PC-9 (cell line): ENCODE measurements at regions of chr20 and their contacts with region 1.

Region 1: GRCh38 chr20:44187051-44187762 is at the start of gene JPH2:
- DNase-seq: peak; percentile 89 to 94
- H3K4me3 ChIP-seq: peak within 1 kb of the TSS; percentile 97
- H3K27ac ChIP-seq: peak within 1 kb of the TSS; percentile 91
- H3K4me1 ChIP-seq: peaks cover 69% of the 10 kb centered on the region
- H3K27me3 ChIP-seq: no peaks in the 10 kb centered on the region
- CTCF ChIP-seq: no peak
- total RNA-seq, gene JPH2: 41.1 and 58.8 TPM in 2 replicates

Region 2: GRCh38 chr20:43448748-43449535 is 738.3 kb before region 1 on chr20:
- CTCF ChIA-PET with region 1: interaction called, 6 read pairs
- POLR2A ChIA-PET with region 1: no interaction called
- intact Hi-C with region 1: loop called (anchors 5 kb)
- DNase-seq: peak in 1 of 2 experiments; percentile 59
- H3K4me3 ChIP-seq: no peak overlapping the region
- H3K27ac ChIP-seq: no peak overlapping the region
- H3K4me1 ChIP-seq: no peaks in the 10 kb centered on the region
- H3K27me3 ChIP-seq: peaks cover 5% of the 10 kb centered on the region
- CTCF ChIP-seq: peak; percentile 92

Region 3: GRCh38 chr20:43492101-43492500 is 695.1 kb before region 1 on chr20:
- CTCF ChIA-PET with region 1: no interaction called
- POLR2A ChIA-PET with region 1: no interaction called
- intact Hi-C with region 1: no loop called
- DNase-seq: peak in 1 of 2 experiments; percentile 62
- H3K4me3 ChIP-seq: no peak overlapping the region
- H3K27ac ChIP-seq: no peak overlapping the region
- H3K4me1 ChIP-seq: peaks cover 6% of the 10 kb centered on the region; the same call in 1 of the 2 replicates
- H3K27me3 ChIP-seq: no peaks in the 10 kb centered on the region
- CTCF ChIP-seq: no peak

Region 4: DNA sequence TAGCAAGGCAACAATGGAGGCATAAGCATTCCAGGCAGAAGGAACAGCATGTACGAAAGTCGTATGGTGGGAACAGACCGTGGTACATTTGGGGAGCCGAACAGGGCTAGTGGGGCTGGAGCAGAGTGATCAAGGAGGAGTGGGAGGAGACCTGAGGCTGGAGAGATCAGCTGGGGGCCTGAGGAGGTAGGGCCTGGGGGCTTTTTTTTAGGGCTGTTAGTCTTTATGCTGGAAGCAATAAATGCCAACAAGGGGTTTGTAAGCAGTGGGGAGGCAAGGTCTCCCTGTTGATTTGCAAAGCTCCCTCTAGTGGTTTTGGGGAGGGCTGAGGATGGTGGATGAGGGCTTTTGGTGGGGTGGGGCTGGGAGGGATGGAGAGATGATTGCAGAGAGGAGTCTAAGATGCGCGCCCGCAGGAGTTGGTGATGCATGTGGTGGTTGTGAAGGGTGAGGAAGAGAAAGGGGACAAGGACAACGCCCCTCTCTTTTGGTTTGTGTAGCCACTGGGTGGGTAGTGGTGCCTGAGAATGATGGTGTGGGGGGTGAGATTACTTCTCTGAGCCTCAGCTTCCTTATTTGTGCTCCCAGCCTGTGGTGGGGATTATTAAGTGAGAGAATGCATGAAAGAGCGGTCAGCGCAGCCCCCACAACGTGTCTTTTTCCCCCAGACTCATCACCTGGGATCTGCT is 346.7 kb before region 1 on chr20:
- CTCF ChIA-PET with region 1: no interaction called
- POLR2A ChIA-PET with region 1: no interaction called
- intact Hi-C with region 1: loop called (anchors 1 kb)
- DNase-seq: peak in 1 of 2 experiments; percentile 15
- H3K4me3 ChIP-seq: no peak overlapping the region
- H3K27ac ChIP-seq: no peak overlapping the region
- H3K4me1 ChIP-seq: peaks cover 39% of the 10 kb centered on the region
- H3K27me3 ChIP-seq: no peaks in the 10 kb centered on the region
- CTCF ChIP-seq: peak; percentile 66

Region 5: GRCh38 chr20:44080646-44081267 is 106.5 kb before region 1 on chr20:
- CTCF ChIA-PET with region 1: interaction called, 4 read pairs
- POLR2A ChIA-PET with region 1: interaction called, 4 read pairs
- intact Hi-C with region 1: loop called (anchors 1 kb)
- DNase-seq: peak; percentile 58 to 80
- H3K4me3 ChIP-seq: no peak overlapping the region
- H3K27ac ChIP-seq: no peak overlapping the region
- H3K4me1 ChIP-seq: peaks cover 17% of the 10 kb centered on the region
- H3K27me3 ChIP-seq: no peaks in the 10 kb centered on the region
- CTCF ChIP-seq: peak; percentile 100

Region 6: GRCh38 chr20:44153636-44154043 is 33.6 kb before region 1 on chr20:
- CTCF ChIA-PET with region 1: interaction called, 4 read pairs
- POLR2A ChIA-PET with region 1: interaction called, 5 read pairs
- intact Hi-C with region 1: loop called (anchors 1 kb)
- DNase-seq: peak in 1 of 2 experiments; percentile 29
- H3K4me3 ChIP-seq: no peak overlapping the region
- H3K27ac ChIP-seq: no peak overlapping the region
- H3K4me1 ChIP-seq: peaks cover 32% of the 10 kb centered on the region
- H3K27me3 ChIP-seq: no peaks in the 10 kb centered on the region
- CTCF ChIP-seq: no peak

Region 7: GRCh38 chr20:44176833-44177534 is 10.2 kb before region 1 on chr20:
- CTCF ChIA-PET with region 1: interaction called, 8 read pairs
- POLR2A ChIA-PET with region 1: interaction called, 11 read pairs
- intact Hi-C with region 1: loop called (anchors 1 kb)
- DNase-seq: peak; percentile 92 to 93
- H3K4me3 ChIP-seq: peak overlapping the region; percentile 41
- H3K27ac ChIP-seq: peak overlapping the region; percentile 99
- H3K4me1 ChIP-seq: peaks cover 84% of the 10 kb centered on the region
- H3K27me3 ChIP-seq: no peaks in the 10 kb centered on the region
- CTCF ChIP-seq: no peak

Region 8: GRCh38 chr20:44401770-44402390 is 214.7 kb after region 1 on chr20:
- CTCF ChIA-PET with region 1: no interaction called
- POLR2A ChIA-PET with region 1: no interaction called
- intact Hi-C with region 1: no loop called
- DNase-seq: no peak
- H3K4me3 ChIP-seq: no peak overlapping the region
- H3K27ac ChIP-seq: no peak overlapping the region
- H3K4me1 ChIP-seq: peaks cover 18% of the 10 kb centered on the region
- H3K27me3 ChIP-seq: no peaks in the 10 kb centered on the region; the same call in 1 of the 2 replicates
- CTCF ChIP-seq: no peak

Region 9: DNA sequence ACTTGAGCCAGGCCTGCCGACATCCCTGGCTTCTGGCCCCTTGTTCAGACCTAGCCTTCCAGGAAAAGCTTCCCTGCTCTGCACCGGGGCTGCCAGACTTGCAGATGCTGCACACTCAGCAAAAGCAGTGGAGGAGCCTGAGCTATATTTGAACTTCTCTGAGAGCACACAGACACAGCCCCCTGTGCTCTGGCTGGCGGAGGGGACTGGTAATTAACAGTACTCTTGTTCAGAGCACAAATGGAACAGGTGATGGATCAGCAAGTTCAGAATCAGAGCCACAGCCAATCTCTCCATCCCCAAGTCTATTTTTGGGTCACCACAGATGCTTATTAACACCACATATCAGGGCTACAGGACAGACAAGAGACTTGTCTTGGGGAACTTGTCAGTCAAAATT is 650.7 kb after region 1 on chr20:
- CTCF ChIA-PET with region 1: no interaction called
- POLR2A ChIA-PET with region 1: no interaction called
- intact Hi-C with region 1: no loop called
- DNase-seq: no peak
- H3K4me3 ChIP-seq: no peak overlapping the region
- H3K27ac ChIP-seq: no peak overlapping the region
- H3K4me1 ChIP-seq: no peaks in the 10 kb centered on the region
- H3K27me3 ChIP-seq: peaks cover 94% of the 10 kb centered on the region
- CTCF ChIP-seq: no peak

Region 10: DNA sequence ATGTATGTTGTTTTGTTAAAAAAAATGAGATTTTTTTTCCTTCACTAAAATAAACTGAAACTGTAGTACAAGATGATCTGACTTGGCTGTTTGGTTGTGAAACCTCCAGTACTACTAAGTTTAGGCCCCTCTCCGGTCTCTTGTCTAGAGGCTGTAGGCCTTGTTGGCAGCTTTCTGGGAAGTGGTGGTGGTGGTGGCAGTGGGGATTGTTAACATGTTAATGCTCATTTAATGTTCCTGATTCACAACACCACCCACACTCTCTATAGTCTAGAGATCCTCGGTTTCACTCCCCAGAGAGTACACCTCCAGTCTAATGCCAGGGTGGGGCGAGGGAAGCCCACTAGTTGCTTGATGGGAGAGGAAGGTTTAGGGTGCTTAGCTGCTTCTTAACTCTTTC is 803.2 kb after region 1 on chr20:
- CTCF ChIA-PET with region 1: no interaction called
- POLR2A ChIA-PET with region 1: no interaction called
- intact Hi-C with region 1: no loop called
- DNase-seq: no peak
- H3K4me3 ChIP-seq: no peak overlapping the region
- H3K27ac ChIP-seq: no peak overlapping the region
- H3K4me1 ChIP-seq: peaks cover 12% of the 10 kb centered on the region; the same call in 1 of the 2 replicates
- H3K27me3 ChIP-seq: no peaks in the 10 kb centered on the region
- CTCF ChIP-seq: no peak